CD14-positive monocyte (primary cell): ENCODE measurements at regions of chr10 and their contacts with region 1.

Region 1: GRCh38 chr10:30502266-30503060 is 68.5 kb downstream of the MAP3K8 start:
- DNase-seq: peak in 1 of 3 donors; percentile 27
- H3K4me3 ChIP-seq: no peak overlapping the region
- H3K4me3 Mint-ChIP-seq: peak overlapping the region in 1 of 2 donors; percentile 20
- H3K27ac ChIP-seq: peak overlapping the region in 1 of 2 donors; percentile 32
- H3K27ac Mint-ChIP-seq: peak overlapping the region in 5 of 7 donors; percentile 8 to 75 (median 45)
- H3K4me1 ChIP-seq: peaks cover 55 to 62% of the 10 kb centered on the region in 2 donors
- H3K4me1 Mint-ChIP-seq: peaks cover 77% of the 10 kb centered on the region
- H3K27me3 ChIP-seq: no peaks in the 10 kb centered on the region
- H3K27me3 Mint-ChIP-seq: peaks cover 0 to 2% (median 0%) of the 10 kb centered on the region in 3 donors
- CTCF ChIP-seq: no peak

Region 2: GRCh38 chr10:30463944-30464451 is 38.5 kb before region 1 on chr10:
- intact Hi-C with region 1: loop called in 1 of 2 experiments (anchors 5 kb)
- DNase-seq: peak in 2 of 3 donors; percentile 26 to 55
- H3K4me3 ChIP-seq: no peak overlapping the region
- H3K4me3 Mint-ChIP-seq: no peak overlapping the region
- H3K27ac ChIP-seq: no peak overlapping the region
- H3K27ac Mint-ChIP-seq: peak overlapping the region in 1 of 7 donors; percentile 55
- H3K4me1 ChIP-seq: peaks cover 32 to 36% of the 10 kb centered on the region in 2 donors
- H3K4me1 Mint-ChIP-seq: peaks cover 35% of the 10 kb centered on the region
- H3K27me3 ChIP-seq: no peaks in the 10 kb centered on the region
- H3K27me3 Mint-ChIP-seq: peaks cover 0 to 6% (median 0%) of the 10 kb centered on the region in 3 donors
- CTCF ChIP-seq: no peak

Region 3: DNA sequence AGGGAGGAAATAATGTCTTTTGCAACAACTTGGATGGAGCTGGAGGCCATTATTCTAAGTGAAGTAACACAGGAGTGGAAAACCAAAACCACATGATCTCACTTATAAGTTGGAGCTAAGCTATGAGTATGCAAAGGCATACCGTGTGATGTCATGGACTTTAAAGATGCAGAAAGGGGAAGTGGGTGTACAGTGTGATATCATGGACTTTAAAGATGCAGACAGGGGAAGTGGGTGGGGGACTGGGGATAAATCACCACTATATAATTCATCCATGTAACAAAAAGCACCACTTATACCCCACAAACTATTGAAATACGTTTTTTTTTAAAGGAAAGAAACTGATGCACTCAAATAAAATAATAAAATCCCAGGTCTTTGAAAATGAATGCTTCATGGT is 97.5 kb after region 1 on chr10:
- intact Hi-C with region 1: no loop called
- DNase-seq: peak; percentile 86 to 96 (median 90)
- H3K4me3 ChIP-seq: no peak overlapping the region
- H3K4me3 Mint-ChIP-seq: no peak overlapping the region
- H3K27ac ChIP-seq: no peak overlapping the region
- H3K27ac Mint-ChIP-seq: peak overlapping the region in 6 of 7 donors; percentile 11 to 75 (median 63)
- H3K4me1 ChIP-seq: peaks cover 0 to 5% of the 10 kb centered on the region in 2 donors
- H3K4me1 Mint-ChIP-seq: peaks cover 18% of the 10 kb centered on the region
- H3K27me3 ChIP-seq: no peaks in the 10 kb centered on the region
- H3K27me3 Mint-ChIP-seq: peaks cover 3 to 4% (median 4%) of the 10 kb centered on the region in 3 donors
- CTCF ChIP-seq: no peak